ENCODE measurements at regions of chr20 and their contacts with region 1.

Region 1: DNA sequence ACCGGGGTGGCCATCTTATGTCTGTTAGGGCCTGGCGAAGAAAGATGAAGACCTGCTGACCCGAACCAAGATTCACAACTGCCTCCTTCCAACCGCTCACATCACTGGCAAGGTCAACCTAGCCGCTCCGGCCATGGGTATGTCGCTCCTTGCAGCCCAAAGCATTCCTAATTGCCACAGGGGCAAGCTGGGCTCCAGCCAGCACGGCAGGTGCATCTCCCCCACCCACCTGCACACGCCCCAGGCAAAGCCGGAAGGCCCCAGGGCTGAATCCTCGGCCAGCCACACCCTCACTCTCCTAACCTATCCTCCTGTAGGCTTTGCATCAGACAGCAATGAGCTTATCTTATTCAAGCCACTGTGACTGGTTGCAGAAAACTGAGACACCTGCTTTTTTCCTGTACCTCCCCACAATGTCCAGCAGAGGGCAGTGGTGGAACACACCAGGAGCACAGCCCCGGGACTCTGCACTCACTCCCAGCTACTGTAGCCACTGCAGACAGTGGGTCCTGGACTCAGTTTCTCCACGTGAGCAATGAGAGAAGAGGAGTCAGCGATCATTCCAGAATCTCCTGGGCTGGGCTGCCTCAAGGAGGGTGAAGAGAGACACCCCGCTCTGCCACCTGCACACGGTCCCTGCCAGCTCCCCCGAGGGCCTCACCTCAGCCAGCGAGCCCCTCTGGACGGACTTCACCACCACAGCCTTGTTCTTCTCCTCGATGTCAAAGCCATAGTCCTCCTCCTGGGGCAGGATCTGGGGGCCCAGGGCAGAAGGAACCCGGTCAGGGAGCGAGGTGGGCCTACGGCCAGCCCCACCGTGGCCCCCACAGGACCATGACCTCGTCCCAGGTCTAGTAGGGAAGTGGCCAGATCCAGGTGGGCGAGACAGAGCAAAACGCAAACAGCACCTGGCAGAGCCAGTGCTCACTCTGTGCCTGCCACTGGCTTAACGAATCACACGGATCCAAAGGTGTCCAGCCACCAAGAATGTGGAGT is 170.0 kb downstream of the PREX1 start:
- DNase-seq: peak; percentile 95
- H3K27ac ChIP-seq: no peak overlapping the region
- CTCF ChIP-seq: peak; percentile 99

Region 2: GRCh38 chr20:48635433-48636310 is 22.1 kb before region 1 on chr20:
- CTCF ChIA-PET with region 1: interaction called, 17 read pairs
- POLR2A ChIA-PET with region 1: no interaction called
- DNase-seq: peak; percentile 81
- H3K27ac ChIP-seq: no peak overlapping the region
- CTCF ChIP-seq: peak; percentile 98

Region 3: GRCh38 chr20:48682529-48683251 is 24.9 kb after region 1 on chr20:
- CTCF ChIA-PET with region 1: interaction called, 22 read pairs
- POLR2A ChIA-PET with region 1: no interaction called
- DNase-seq: peak; percentile 84
- H3K27ac ChIP-seq: peak overlapping the region; percentile 57
- CTCF ChIP-seq: no peak

Region 4: DNA sequence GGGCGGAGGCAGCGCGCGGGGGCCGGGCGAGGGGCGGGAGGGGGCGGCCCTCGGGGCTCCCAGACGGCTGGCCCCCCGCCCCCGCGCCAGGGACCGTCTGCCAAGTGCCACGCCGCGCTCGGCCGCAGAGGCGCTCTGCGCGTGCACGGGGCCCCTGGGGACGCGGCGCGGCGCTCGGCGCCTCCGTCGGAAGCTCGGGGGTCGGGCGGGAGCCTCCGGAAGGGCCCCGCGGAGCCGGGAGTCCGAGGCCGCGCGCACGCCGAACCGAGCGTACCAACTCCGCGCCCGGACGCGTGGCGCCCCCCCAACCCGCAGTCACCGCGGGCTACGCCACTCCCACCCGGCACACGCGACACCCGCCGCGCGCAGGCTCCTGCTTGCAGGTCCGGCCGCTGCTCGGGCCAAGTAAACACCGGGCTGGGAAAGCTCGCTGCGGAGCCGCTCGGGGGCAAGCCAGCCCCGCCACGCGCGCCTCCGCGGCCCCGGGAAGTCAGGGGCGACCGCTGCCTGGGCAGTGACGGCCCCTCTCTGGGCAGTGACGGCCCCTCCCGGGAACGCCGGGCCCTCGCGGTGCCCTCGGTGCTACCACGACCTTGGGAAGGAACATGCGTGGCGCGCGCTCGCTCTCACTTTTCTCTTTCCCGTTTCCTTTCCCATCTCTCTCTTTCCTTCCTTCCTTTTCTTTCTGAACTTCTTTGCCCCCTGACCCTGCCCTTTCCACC is 170.4 kb after region 1 on chr20:
- CTCF ChIA-PET with region 1: interaction called, 17 read pairs
- POLR2A ChIA-PET with region 1: no interaction called
- DNase-seq: peak; percentile 70
- H3K27ac ChIP-seq: no peak overlapping the region
- CTCF ChIP-seq: no peak

Region 5: DNA sequence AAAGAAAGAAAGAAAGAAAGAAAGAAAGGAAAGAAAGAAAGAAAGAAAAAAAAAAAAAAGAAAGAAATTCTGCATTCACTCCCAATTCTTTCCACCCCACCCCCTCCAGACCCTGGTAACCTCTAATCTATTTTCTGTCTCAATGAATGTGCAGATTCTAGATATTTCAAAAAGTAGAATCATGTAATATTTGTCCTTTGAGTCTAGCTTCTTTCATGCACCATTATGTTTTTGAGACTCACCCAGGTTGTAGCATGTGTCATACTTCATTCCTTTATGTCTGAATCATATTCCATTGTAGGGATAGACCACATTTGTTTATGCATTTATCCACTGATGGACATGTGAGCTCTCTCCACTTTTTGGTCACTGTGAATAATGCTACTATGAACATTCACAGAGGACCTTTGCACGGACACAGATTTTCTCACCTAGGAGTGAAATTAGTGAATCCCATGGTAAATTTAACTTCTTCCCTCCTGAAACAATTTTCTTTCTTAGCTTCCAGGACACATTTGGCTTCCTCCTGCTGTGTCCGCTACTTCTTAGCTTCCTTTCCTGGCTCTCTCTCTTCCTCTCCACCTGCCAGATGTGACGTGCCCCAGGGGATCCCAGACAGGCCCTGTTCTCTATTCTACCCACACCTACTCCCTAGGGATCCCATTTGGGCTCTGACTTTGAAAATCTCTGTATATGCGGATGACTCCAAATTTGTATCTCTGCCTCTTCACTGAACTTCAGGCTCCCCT is 239.6 kb after region 1 on chr20:
- CTCF ChIA-PET with region 1: interaction called, 68 read pairs
- POLR2A ChIA-PET with region 1: no interaction called
- DNase-seq: peak; percentile 93
- H3K27ac ChIP-seq: peak overlapping the region; percentile 43
- CTCF ChIP-seq: no peak

Region 6: GRCh38 chr20:48917296-48917695 is 259.5 kb after region 1 on chr20:
- CTCF ChIA-PET with region 1: interaction called, 12 read pairs
- POLR2A ChIA-PET with region 1: no interaction called
- DNase-seq: no peak
- H3K27ac ChIP-seq: no peak overlapping the region
- CTCF ChIP-seq: no peak